ENCODE measurements at regions of chr1 and their contacts with region 1.

Region 1: GRCh38 chr1:89454845-89455521 is 69.6 kb upstream of the LRRC8B start:
- DNase-seq: peak; percentile 77
- ATAC-seq: peak; percentile 43
- H3K4me3 Mint-ChIP-seq: no peak overlapping the region
- H3K27ac Mint-ChIP-seq: no peak overlapping the region
- H3K4me1 Mint-ChIP-seq: peaks cover 27% of the 10 kb centered on the region
- H3K27me3 Mint-ChIP-seq: peaks cover 26% of the 10 kb centered on the region

Region 2: DNA sequence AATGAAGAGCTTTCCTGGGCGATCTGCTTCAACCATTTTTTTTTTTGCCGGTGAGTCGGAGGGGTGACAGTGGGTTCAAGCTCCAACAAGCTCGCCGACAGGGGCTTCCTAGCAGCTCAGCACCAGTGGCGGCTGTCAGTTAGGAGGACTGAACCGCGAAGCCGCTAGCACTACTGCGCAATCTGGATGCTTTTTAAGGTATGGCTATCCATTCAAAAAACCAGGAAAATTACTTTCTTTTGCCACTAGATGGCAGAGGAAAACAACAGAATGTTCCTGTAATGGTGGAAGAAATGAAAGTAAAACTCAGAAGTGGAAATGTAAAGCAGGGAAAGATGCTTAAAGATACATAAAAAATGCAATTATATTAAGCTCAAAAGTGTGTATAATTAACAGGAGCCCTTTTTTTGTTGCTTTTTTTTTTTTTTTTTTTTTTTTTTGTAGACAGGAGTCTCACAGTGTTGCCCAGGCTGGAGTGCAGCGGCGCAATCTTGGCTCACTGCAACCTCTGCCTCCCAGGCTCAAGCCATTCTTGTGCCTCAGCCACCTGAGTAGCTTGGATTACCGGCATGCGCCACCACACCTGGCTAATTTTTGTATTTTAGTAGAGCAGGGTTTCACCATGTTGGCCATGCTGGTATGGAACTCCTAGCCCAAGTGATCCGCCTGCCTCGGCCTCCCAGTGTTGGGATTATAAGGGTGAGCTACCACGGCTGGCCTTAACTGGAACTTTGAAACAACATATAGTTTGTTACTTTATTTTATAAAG is 471.0 kb before region 1 on chr1:
- CTCF ChIA-PET with region 1: interaction called, 12 read pairs
- POLR2A ChIA-PET with region 1: no interaction called
- intact Hi-C with region 1: no loop called
- DNase-seq: peak; percentile 47
- ATAC-seq: peak; percentile 29
- H3K4me3 Mint-ChIP-seq: peak overlapping the region; percentile 43
- H3K27ac Mint-ChIP-seq: peak overlapping the region; percentile 87
- H3K4me1 Mint-ChIP-seq: peaks cover 86% of the 10 kb centered on the region
- H3K27me3 Mint-ChIP-seq: no peaks in the 10 kb centered on the region

Region 3: DNA sequence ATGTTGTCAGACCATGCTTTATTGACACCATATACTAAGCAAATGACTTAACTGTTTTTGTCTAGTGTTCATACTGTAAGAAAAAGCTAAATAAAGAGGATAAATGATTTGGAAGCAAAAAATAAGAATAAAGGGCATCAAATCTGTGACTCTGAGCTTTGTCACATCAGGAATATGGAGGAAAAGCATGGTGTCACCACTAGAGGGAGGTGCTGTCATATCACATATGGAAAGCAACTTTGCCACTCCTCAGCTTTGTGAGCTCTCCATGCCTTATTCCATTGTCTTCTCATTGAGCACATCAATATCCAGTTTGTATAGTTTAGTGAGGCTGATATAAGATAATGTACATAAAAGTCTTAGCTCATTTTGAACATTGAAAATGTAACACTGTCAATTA is 369.2 kb before region 1 on chr1:
- CTCF ChIA-PET with region 1: interaction called, 31 read pairs
- POLR2A ChIA-PET with region 1: no interaction called
- intact Hi-C with region 1: loop called (anchors 1 kb)
- DNase-seq: peak; percentile 70
- ATAC-seq: peak; percentile 78
- H3K4me3 Mint-ChIP-seq: no peak overlapping the region
- H3K27ac Mint-ChIP-seq: no peak overlapping the region
- H3K4me1 Mint-ChIP-seq: peaks cover 6% of the 10 kb centered on the region
- H3K27me3 Mint-ChIP-seq: no peaks in the 10 kb centered on the region

Region 4: GRCh38 chr1:89274411-89274857 is 180.5 kb before region 1 on chr1:
- CTCF ChIA-PET with region 1: interaction called, 3 read pairs
- POLR2A ChIA-PET with region 1: no interaction called
- intact Hi-C with region 1: loop called in 1 of 2 experiments (anchors 5 kb)
- DNase-seq: no peak
- ATAC-seq: peak; percentile 63
- H3K4me3 Mint-ChIP-seq: peak overlapping the region; percentile 98
- H3K27ac Mint-ChIP-seq: peak overlapping the region; percentile 99
- H3K4me1 Mint-ChIP-seq: peaks cover 75% of the 10 kb centered on the region
- H3K27me3 Mint-ChIP-seq: no peaks in the 10 kb centered on the region

Region 5: DNA sequence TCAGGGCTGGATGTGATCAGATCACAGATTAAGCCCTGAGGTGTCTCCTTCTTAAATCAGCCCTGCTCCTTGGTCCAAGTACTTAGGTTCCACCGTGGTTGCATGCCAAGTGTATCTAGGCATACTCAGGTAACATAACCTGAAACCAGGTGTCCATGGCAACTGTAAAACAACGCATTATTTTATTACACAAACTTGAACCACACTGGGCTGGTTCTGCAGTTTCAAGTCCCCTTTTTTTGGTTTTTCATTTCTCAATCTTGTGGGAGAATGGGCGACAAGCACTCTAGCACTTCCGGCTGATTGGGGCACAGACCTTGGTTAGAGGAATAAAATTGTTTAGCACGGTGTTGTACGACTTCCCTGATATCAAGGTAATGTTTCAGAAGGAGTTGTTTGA is 25.9 kb before region 1 on chr1:
- CTCF ChIA-PET with region 1: interaction called, 4 read pairs
- POLR2A ChIA-PET with region 1: interaction called, 4 read pairs
- intact Hi-C with region 1: loop called (anchors 1 kb)
- DNase-seq: no peak
- ATAC-seq: no peak
- H3K4me3 Mint-ChIP-seq: no peak overlapping the region
- H3K27ac Mint-ChIP-seq: no peak overlapping the region
- H3K4me1 Mint-ChIP-seq: peaks cover 4% of the 10 kb centered on the region
- H3K27me3 Mint-ChIP-seq: peaks cover 5% of the 10 kb centered on the region

Region 6: DNA sequence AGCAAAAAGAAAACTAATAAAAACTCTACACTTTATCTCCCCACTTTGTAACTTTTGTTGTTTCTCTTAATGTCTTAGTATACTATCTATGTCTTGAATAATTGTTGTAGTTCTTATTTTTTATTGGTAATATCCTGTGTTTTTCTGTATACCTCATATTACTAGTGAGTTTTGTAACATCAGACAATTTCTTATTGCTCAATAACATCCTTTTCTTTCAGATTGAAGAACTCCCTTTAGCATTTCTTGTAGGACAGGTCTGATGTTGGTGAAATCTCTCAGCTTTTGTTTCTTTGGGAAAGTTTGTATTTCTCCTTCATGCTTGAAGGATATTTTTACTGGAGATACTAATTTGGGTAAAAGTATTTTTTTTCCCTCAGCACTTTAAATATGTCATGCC is 10.2 kb before region 1 on chr1:
- CTCF ChIA-PET with region 1: no interaction called
- POLR2A ChIA-PET with region 1: no interaction called
- intact Hi-C with region 1: no loop called
- DNase-seq: no peak
- ATAC-seq: no peak
- H3K4me3 Mint-ChIP-seq: no peak overlapping the region
- H3K27ac Mint-ChIP-seq: no peak overlapping the region
- H3K4me1 Mint-ChIP-seq: peaks cover 2% of the 10 kb centered on the region
- H3K27me3 Mint-ChIP-seq: peaks cover 17% of the 10 kb centered on the region

Region 7: DNA sequence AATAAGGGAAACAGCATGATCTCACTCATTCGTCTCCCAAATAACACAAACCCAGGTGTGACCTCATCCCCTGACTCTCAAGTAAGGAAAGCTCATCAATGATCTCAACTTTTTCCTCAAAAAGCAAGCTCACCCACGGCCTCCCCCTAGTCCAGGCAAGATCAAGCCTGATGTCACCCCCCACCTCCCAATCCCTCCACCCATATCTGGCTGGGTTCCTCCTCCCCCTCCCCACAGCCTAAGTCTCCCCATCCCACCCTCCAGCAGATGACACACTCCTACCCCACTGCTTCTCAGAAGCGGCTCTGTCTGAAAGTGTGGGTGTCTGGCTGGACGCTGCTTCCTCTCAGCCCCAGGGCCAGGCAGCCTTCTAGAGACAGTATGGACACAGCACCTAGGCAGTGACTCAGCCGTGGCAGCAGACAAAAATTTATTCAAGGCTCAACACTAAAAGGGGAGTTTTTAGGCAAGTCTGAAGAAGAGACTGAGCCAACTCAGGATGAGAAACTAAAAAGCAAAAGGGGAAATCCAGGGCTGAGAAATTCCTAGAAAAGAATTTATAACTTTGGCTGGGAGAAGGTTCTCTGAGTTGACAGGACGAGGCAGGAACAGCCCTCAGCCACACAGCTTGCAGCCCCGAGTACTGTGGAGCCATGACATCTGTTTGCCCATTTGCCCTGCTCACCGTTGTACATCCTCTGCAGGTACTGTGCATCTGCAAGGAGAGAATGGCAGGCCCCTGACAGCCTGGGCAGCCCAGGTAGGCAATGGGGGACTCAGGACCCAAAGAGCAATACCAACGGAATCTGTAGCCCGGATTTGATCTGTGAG is 284.2 kb after region 1 on chr1:
- CTCF ChIA-PET with region 1: no interaction called
- POLR2A ChIA-PET with region 1: no interaction called
- intact Hi-C with region 1: no loop called
- DNase-seq: peak; percentile 76
- ATAC-seq: peak; percentile 94
- H3K4me3 Mint-ChIP-seq: peak overlapping the region; percentile 55
- H3K27ac Mint-ChIP-seq: peak overlapping the region; percentile 78
- H3K4me1 Mint-ChIP-seq: peaks cover 40% of the 10 kb centered on the region
- H3K27me3 Mint-ChIP-seq: no peaks in the 10 kb centered on the region

Measured in activated CD4-positive, alpha-beta T cell treated with anti-CD3 and anti-CD28 coated beads for 36 hours (primary cell).